ENCODE measurements at regions of chr17 and their contacts with region 1.

Region 1: DNA sequence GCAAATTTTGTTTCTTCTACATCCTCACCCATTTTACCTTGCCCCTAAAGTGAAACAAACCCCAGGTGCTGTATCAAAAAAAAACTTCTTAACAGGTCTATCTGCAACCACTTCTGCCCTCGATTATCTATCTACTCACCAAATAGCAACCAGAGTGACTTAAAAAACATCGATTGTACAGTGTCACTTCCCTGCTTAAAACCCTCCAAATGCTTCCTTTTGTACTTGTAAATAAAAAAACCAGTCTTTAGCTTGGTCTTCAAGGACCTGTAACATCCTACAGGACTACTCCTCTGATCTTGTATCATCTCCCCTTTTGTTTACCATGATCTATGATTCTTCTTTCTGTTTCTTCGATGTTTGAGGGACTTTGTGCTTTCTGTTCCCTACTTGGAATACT is 82.7 kb upstream of the CORO6 start:
- DNase-seq: peak in 2 of 5 donors; percentile 27 to 40
- H3K4me3 ChIP-seq: peak overlapping the region; percentile 8
- H3K4me3 Mint-ChIP-seq: peak overlapping the region; percentile 14 to 93 (median 68)
- H3K27ac ChIP-seq: peak overlapping the region; percentile 18
- H3K27ac Mint-ChIP-seq: peak overlapping the region; percentile 64 to 100 (median 96)
- H3K4me1 ChIP-seq: peaks cover 46% of the 10 kb centered on the region
- H3K4me1 Mint-ChIP-seq: peaks cover 51 to 69% (median 64%) of the 10 kb centered on the region in 3 donors
- H3K27me3 ChIP-seq: no peaks in the 10 kb centered on the region
- H3K27me3 Mint-ChIP-seq: no peaks in the 10 kb centered on the region

Region 2: GRCh38 chr17:29722411-29723198 is 17.2 kb after region 1 on chr17:
- CTCF ChIA-PET with region 1: interaction called, 26 read pairs
- POLR2A ChIA-PET with region 1: interaction called, 10 read pairs
- DNase-seq: peak; percentile 5 to 68 (median 53)
- H3K4me3 ChIP-seq: peak overlapping the region; percentile 32
- H3K4me3 Mint-ChIP-seq: peak overlapping the region; percentile 53 to 79 (median 70)
- H3K27ac ChIP-seq: peak overlapping the region; percentile 49
- H3K27ac Mint-ChIP-seq: peak overlapping the region; percentile 72 to 96 (median 88)
- H3K4me1 ChIP-seq: peaks cover 77% of the 10 kb centered on the region
- H3K4me1 Mint-ChIP-seq: peaks cover 76 to 92% (median 91%) of the 10 kb centered on the region in 3 donors
- H3K27me3 ChIP-seq: no peaks in the 10 kb centered on the region
- H3K27me3 Mint-ChIP-seq: no peaks in the 10 kb centered on the region